Aorta (tissue), 5 donors: ENCODE measurements at regions of chr6 and their contacts with region 1.

Region 1: DNA sequence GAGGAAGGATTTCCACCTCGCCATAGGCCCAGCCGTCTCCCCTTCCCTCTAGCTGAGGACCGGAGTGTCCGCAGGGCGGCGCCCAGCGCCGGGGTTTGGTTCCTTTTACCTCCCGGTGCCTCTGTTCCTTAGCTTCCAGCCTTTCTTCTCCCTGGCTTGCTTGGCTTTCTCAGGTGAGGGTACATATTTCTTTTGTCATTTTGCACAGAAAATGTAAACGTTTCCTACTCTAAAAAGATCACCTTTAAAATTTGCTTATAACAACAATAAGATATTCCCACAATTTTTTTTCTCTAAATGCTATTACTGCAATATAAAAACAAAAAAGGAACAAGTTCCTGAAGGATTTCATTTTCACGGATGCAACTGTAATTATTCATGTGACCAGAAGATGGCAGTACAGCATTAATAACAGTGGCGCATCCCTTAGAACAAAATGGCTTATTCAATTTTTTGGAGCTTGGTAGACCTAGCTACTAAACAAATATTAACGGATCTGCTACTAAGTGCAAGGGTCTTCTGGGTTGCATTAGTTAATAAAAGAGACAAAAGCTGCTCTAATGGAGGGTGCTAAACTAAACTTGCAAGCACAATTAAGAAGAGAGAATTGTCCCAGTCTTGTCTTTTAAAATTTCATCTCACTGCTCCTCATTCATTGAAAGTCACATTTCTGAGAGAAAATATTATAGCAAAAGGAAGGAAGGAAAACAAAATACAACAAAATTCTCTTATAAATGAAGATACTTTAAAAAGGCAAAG is 172.9 kb downstream of the ADGRG6 start:
- DNase-seq: no peak
- ATAC-seq: no peak
- H3K4me3 ChIP-seq: no peak overlapping the region
- H3K27ac ChIP-seq: no peak overlapping the region
- H3K4me1 ChIP-seq: no peaks in the 10 kb centered on the region
- H3K27me3 ChIP-seq: no peaks in the 10 kb centered on the region

Region 2: DNA sequence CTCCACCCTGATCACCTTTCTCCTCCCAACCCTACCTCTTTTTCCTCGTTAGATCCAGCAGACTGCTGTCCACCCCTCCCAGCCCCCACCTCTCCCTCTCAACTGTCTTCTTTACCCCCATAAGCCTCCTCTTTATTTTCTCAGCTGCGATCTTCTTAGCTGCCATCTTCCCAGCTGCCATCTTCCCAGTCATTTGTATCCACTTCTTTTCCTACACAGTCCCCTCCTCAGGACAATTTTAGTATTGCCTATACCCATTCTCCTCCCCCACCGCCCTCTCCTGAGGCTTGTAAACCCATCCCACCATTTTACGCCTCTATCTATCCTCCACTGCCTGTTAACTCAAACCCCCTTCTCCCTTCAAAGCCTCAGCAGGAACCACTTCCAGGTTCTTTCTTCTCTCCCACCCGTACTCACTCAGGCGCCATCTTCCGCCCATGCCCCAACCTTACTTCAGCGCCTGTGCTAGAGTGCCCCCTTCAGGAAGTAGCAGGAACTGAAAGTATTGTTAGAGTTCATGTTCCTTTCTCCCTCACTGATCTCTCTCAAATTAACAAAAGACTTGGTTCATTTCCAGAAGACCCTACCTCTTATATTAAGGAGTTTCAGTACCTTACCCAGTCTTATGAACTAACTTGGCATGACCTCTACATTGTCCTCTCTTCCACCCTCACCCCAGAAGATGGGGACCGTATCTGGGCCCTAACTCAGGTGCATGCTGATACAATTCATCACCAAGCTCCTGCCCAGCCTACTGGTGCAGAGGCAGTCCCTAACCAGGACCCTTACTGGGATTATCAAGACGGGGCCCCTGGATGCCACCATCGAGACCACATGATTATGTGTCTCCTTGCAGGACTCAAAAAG is 63.1 kb after region 1 on chr6:
- intact Hi-C with region 1: loop called in 1 of 2 experiments (anchors 5 kb)
- DNase-seq: no peak
- ATAC-seq: no peak
- H3K4me3 ChIP-seq: no peak overlapping the region
- H3K27ac ChIP-seq: no peak overlapping the region
- H3K4me1 ChIP-seq: no peaks in the 10 kb centered on the region
- H3K27me3 ChIP-seq: no peaks in the 10 kb centered on the region

Region 3: DNA sequence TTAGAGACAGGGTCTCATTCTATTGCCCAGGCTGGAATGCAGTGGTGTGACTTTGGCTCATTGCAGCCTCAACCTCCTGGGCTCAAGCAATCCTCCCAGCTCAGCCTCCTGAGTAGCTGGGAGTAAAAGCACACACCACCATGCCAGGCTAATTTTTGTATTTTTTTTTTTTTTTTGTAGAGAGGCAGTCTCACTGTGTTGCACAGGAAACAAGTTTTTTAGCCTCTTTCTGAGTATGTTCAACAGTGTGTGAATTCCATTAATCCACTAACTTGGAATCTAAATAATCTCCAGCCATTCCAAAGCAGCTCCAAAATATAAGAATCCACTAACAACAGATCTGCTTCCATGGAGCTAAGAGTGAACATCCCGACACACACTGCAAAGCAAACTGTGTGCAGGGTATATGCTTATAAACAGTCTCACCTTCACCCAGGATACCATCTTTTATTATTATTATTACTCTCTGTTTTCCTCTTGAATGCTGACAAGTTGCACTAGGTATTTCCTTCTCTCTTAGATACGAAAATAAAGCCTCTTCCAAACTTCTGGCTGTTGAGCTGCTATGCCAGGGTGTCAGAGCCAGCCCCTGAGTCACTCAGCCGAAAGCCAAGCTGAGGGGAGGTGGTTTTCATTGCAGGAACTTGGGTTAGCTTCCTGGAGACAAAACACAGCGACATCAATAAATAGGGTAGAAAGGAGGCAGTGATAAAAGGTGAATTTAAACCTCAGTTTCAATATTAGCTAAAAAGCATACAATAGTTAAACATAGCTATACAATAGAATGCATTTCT is 205.4 kb after region 1 on chr6:
- intact Hi-C with region 1: loop called (anchors 5 to 10 kb)
- DNase-seq: peak; percentile 81 to 83
- ATAC-seq: peak; percentile 55
- H3K4me3 ChIP-seq: no peak overlapping the region
- H3K27ac ChIP-seq: peak overlapping the region; percentile 57 to 59
- H3K4me1 ChIP-seq: peaks cover 0 to 4% of the 10 kb centered on the region in 2 donors
- H3K27me3 ChIP-seq: no peaks in the 10 kb centered on the region

Region 4: GRCh38 chr6:143427109-143427817 is 952.6 kb after region 1 on chr6:
- intact Hi-C with region 1: loop called (anchors 5 to 10 kb)
- DNase-seq: peak; percentile 81 to 89
- ATAC-seq: peak; percentile 94
- H3K4me3 ChIP-seq: no peak overlapping the region
- H3K27ac ChIP-seq: no peak overlapping the region
- H3K4me1 ChIP-seq: peaks cover 0 to 3% of the 10 kb centered on the region in 2 donors
- H3K27me3 ChIP-seq: no peaks in the 10 kb centered on the region